OCI-LY7 (cell line): ENCODE measurements at regions of chr2 and their contacts with region 1.

Region 1: DNA sequence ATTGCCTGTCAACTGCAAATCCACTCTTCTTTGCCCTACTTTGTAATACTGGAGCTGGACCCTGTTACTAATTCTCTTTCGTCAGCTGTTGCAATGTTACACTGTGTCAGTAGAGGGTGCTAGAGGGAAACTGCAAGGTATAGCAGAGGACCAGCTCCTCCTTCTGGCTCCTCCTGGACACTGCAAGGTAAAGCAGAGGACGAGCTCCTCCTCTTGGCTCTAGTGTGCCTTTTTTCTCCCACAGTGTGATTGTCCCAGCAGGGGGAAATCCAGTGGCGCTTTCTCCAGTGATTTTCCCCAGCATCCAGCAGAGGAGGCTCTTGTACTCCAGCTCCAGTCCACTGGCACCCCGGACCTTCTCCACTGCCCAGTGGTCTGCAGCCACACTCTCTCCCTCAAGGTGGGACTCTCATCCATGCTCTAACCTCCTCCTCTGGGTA is 95.6 kb downstream of the CAPN13 start:
- DNase-seq: peak; percentile 93
- H3K4me3 ChIP-seq: no peak overlapping the region
- H3K27ac ChIP-seq: no peak overlapping the region
- H3K4me1 ChIP-seq: peaks cover 4% of the 10 kb centered on the region
- CTCF ChIP-seq: peak; percentile 97

Region 2: DNA sequence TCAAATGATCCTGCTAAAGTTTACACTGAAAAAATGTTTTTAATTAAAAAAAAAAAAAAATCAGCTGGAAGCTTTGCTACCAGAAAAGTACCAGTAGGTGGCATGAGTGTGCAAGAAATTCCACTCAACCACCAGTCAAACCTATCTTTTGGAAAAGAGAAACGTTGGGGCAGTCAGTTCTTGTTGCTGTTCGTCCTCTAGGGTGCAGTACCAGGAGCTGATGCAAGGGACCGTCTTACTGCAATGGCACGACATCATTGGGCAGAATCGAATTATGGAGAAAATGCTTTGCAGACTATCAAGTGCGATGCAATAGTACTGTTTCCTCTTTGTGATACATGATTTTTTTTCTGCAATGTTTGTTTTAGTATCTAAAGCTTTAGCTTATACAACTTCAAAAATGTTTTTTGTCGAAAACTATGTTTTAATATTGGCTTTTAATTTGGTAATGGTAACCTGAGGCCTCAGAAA is 546.6 kb before region 1 on chr2:
- CTCF ChIA-PET with region 1: interaction called, 28 read pairs
- POLR2A ChIA-PET with region 1: interaction called, 18 read pairs
- intact Hi-C with region 1: loop called (anchors 1 kb)
- DNase-seq: peak; percentile 92
- H3K4me3 ChIP-seq: no peak overlapping the region
- H3K27ac ChIP-seq: no peak overlapping the region
- H3K4me1 ChIP-seq: peaks cover 22% of the 10 kb centered on the region
- CTCF ChIP-seq: peak; percentile 99

Region 3: DNA sequence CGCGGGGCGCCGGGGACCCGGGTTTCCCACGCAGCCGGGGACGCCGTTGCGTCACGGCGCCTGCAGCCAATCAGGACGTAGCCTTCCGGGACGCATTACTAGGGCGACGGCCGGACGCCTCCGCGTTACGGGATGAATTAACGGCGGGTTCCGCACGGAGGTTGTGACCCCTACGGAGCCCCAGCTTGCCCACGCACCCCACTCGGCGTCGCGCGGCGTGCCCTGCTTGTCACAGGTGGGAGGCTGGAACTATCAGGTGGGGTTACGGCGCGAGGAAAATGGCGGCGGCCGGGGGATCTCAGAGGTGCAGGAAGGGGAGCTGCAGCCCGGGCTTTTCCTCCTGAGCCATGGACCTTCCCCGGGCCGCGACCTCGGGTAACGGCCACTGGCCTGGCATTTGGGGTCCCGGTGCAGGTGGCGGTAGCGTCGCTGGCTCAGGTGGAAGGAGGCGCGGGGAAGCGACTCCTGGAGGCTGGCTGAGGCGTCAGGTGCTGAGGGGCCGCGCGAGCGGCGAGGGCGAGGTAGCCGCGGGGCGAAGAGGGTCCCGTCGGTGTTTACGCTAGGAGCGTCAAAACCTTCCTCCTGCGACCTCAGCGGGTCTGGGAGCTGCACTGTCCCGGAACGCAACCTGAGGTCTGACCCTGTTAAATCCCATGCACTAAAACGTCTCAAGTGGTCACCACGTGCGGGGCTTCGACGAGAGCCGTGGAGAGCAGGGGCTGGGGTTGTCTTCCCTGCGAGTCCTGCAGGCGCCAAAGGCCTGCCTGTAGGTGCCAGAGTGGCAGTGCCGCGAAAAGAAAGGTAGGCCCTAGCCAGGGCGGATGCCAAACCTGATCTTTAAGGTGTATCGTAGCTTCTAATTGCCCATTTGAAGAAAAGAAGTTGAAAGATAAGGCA is 264.3 kb before region 1 on chr2 and contains the start of gene LCLAT1:
- CTCF ChIA-PET with region 1: no interaction called
- POLR2A ChIA-PET with region 1: interaction called, 3 read pairs
- intact Hi-C with region 1: loop called (anchors 5 kb)
- DNase-seq: peak; percentile 88
- H3K4me3 ChIP-seq: peak within 1 kb of the TSS; percentile 89
- H3K27ac ChIP-seq: peak within 1 kb of the TSS; percentile 36
- H3K4me1 ChIP-seq: peaks cover 14% of the 10 kb centered on the region
- CTCF ChIP-seq: no peak
- total RNA-seq, gene LCLAT1: 9.2 and 11.5 TPM in 2 replicates

Region 4: DNA sequence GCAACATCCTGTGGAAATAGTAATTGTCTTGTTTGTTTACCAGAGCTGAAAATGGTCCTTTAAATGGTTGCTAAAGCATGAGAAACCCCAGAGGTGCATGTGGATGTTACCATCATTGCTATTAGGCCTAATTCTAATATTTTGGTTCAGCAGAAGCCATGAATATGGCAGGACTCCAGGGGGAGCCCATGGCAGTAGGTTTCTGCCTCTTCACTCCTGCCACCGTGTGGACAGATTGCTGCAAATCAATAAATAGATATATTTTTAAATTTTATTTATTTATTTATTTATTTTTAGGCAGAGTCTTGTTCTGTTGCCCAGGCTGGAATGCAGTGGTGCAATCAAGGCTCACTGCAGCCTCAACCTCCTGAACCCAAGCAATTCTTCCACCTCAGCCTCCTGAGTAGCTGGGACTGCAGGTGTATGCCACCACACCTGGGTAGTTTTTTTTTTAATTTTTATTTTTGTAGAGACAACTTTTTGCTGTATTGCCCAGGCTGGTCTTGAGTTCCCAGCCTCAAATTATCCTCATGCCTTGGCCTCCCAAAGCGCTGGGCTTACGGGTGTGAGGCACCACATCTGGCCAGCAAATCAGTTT is 150.5 kb after region 1 on chr2:
- CTCF ChIA-PET with region 1: no interaction called
- POLR2A ChIA-PET with region 1: interaction called, 3 read pairs
- intact Hi-C with region 1: loop called (anchors 2 kb)
- DNase-seq: peak; percentile 79
- H3K4me3 ChIP-seq: no peak overlapping the region
- H3K27ac ChIP-seq: no peak overlapping the region
- H3K4me1 ChIP-seq: peaks cover 23% of the 10 kb centered on the region
- CTCF ChIP-seq: peak; percentile 88

Region 5: GRCh38 chr2:31170071-31170698 is 458.5 kb after region 1 on chr2:
- CTCF ChIA-PET with region 1: interaction called, 4 read pairs
- POLR2A ChIA-PET with region 1: interaction called, 4 read pairs
- intact Hi-C with region 1: loop called (anchors 1 kb)
- DNase-seq: peak; percentile 78
- H3K4me3 ChIP-seq: no peak overlapping the region
- H3K27ac ChIP-seq: no peak overlapping the region
- H3K4me1 ChIP-seq: peaks cover 27% of the 10 kb centered on the region
- CTCF ChIP-seq: peak; percentile 99

Region 6: GRCh38 chr2:31523871-31524492 is 812.3 kb after region 1 on chr2:
- CTCF ChIA-PET with region 1: no interaction called
- POLR2A ChIA-PET with region 1: no interaction called
- intact Hi-C with region 1: loop called (anchors 1 kb)
- DNase-seq: peak; percentile 69
- H3K4me3 ChIP-seq: no peak overlapping the region
- H3K27ac ChIP-seq: no peak overlapping the region
- H3K4me1 ChIP-seq: no peaks in the 10 kb centered on the region
- CTCF ChIP-seq: peak; percentile 95